Breast epithelium (tissue), 4 donors: ENCODE measurements at regions of chr5 and their contacts with region 1.

Region 1: GRCh38 chr5:16510121-16510520 is 44.5 kb upstream of the ZNF622 start:
- DNase-seq: no peak
- H3K4me3 ChIP-seq: no peak overlapping the region
- H3K27ac ChIP-seq: peak overlapping the region in 1 of 2 donors; percentile 88
- H3K4me1 ChIP-seq: no peaks in the 10 kb centered on the region
- H3K27me3 ChIP-seq: no peaks in the 10 kb centered on the region
- CTCF ChIP-seq: no peak
- POLR2A ChIP-seq: no peak

Region 2: GRCh38 chr5:17241635-17242034 is 731.5 kb after region 1 on chr5:
- intact Hi-C with region 1: loop called (anchors 5 kb)
- DNase-seq: no peak
- H3K4me3 ChIP-seq: no peak overlapping the region
- H3K27ac ChIP-seq: no peak overlapping the region
- H3K4me1 ChIP-seq: no peaks in the 10 kb centered on the region
- H3K27me3 ChIP-seq: no peaks in the 10 kb centered on the region
- CTCF ChIP-seq: no peak
- POLR2A ChIP-seq: no peak